Naive thymus-derived CD4-positive, alpha-beta T cell (primary cell): ENCODE measurements at regions of chr11 and their contacts with region 1.

Region 1: DNA sequence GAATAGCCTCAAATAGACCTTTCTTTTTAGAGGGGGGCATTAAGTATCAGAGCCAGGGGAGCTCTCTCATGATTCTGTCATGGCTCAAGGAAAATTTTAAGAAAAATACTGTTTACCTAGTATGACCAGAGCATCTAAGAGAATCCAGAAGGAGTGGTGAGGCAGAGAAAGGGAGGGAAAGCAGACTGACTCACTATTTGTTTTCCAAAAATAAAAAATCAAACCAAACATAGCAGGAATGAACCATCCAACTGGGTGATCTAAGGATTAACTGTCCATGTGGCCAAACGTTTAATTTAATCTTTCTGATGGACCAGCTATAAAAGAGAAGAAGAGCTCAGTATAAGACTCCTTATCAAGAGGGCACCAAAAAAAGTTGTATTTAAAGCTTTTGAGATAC is 70.8 kb downstream of the GAB2 start:
- DNase-seq: no peak
- ATAC-seq: no peak
- H3K4me3 ChIP-seq: no peak overlapping the region
- H3K4me3 Mint-ChIP-seq: no peak overlapping the region
- H3K27ac ChIP-seq: no peak overlapping the region
- H3K27ac Mint-ChIP-seq: no peak overlapping the region
- H3K4me1 ChIP-seq: no peaks in the 10 kb centered on the region
- H3K4me1 Mint-ChIP-seq: peaks cover 16 to 73% (median 20%) of the 10 kb centered on the region in 7 donors
- H3K27me3 ChIP-seq: no peaks in the 10 kb centered on the region
- H3K27me3 Mint-ChIP-seq: peaks cover 3 to 20% (median 15%) of the 10 kb centered on the region in 5 donors

Region 2: DNA sequence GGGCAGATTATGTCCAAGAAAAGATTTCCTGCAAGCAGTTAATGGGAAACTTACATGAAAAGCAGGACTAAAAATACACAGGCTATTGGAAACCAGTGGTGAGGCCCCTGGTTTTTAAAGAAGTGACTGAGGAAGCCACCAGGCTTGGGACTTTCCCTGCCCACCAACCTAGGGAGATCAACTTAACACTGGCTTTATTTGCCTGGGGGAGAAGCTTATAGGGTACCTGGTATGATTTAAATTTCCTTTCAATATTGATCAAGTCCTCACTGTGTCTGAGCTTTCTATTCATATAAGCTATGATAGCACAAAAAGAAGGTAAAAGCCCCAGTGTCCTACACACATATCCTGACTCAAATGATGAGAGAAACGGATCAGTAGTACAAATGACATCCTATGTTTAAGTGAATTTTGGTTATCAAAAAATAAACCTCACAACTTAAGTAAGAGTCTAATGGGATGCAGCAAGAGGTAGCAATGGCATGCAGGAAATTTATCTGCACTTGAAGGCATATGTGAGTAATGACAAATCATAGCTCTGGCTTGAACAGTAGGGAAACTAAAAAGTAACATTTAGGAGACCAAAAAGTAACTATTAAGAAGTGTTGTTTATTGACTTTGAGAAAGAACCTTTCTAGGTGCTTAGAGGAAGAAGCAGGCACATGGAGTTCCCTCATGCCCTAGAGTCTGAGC is 14.5 kb before region 1 on chr11:
- CTCF ChIA-PET with region 1: no interaction called
- POLR2A ChIA-PET with region 1: no interaction called
- intact Hi-C with region 1: loop called in 1 of 2 experiments (anchors 2 kb)
- DNase-seq: no peak
- ATAC-seq: peak; percentile 48
- H3K4me3 ChIP-seq: no peak overlapping the region
- H3K4me3 Mint-ChIP-seq: peak overlapping the region in 1 of 10 donors; percentile 45
- H3K27ac ChIP-seq: no peak overlapping the region
- H3K27ac Mint-ChIP-seq: peak overlapping the region in 2 of 9 donors; percentile 19 to 65
- H3K4me1 ChIP-seq: no peaks in the 10 kb centered on the region
- H3K4me1 Mint-ChIP-seq: peaks cover 0 to 73% (median 0%) of the 10 kb centered on the region in 7 donors
- H3K27me3 ChIP-seq: no peaks in the 10 kb centered on the region
- H3K27me3 Mint-ChIP-seq: peaks cover 0 to 2% (median 0%) of the 10 kb centered on the region in 5 donors

Region 3: GRCh38 chr11:78406538-78407196 is 59.9 kb after region 1 on chr11:
- CTCF ChIA-PET with region 1: no interaction called
- POLR2A ChIA-PET with region 1: no interaction called
- intact Hi-C with region 1: no loop called
- DNase-seq: no peak
- ATAC-seq: no peak
- H3K4me3 ChIP-seq: no peak overlapping the region
- H3K4me3 Mint-ChIP-seq: no peak overlapping the region
- H3K27ac ChIP-seq: no peak overlapping the region
- H3K27ac Mint-ChIP-seq: no peak overlapping the region
- H3K4me1 ChIP-seq: no peaks in the 10 kb centered on the region
- H3K4me1 Mint-ChIP-seq: peaks cover 0 to 31% (median 0%) of the 10 kb centered on the region in 7 donors
- H3K27me3 ChIP-seq: no peaks in the 10 kb centered on the region
- H3K27me3 Mint-ChIP-seq: peaks cover 0 to 5% (median 0%) of the 10 kb centered on the region in 5 donors